ENCODE measurements at regions of chr11 and their contacts with region 1.

Region 1: DNA sequence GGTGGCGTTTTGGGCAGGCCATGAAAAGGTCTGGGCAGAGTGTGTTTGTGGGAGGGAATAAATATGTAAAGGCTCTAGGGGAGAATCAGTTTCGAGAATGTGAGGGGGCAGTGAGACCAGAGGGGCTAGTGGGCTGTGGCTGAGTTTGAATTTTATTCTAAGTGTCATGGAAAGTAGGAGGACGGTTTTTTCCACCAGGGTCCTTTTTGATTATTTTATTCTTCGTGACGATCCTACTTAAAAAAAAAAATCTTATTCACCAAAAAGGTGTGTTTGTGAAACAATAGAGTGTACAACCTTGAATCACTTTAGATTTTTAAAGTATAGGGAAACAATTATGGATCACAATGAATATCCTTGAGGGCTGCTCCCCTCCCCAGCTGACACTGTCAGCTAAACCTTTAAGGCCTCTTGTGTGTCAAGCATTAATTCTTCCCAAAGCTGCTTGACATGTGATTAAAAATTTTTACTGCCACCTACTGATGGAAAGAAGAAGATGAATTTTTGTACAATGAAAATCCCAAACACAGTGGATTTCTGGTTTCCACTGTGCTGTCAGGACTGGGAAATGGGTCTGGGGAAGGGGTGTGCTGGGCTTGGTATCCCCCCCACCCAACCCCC is 107.5 kb upstream of the OR4B1 start:
- DNase-seq: no peak
- ATAC-seq: peak; percentile 57

Region 2: GRCh38 chr11:47715082-47715669 is 394.0 kb before region 1 on chr11 and contains the start of gene AGBL2:
- intact Hi-C with region 1: no loop called
- DNase-seq: peak; percentile 93
- ATAC-seq: peak; percentile 95
- total RNA-seq, gene AGBL2: 0.14 TPM

Region 3: GRCh38 chr11:47932544-47932943 is 176.6 kb before region 1 on chr11:
- intact Hi-C with region 1: loop called (anchors 1 kb)
- DNase-seq: no peak
- ATAC-seq: no peak

Region 4: GRCh38 chr11:48052183-48053045 is 56.7 kb before region 1 on chr11:
- intact Hi-C with region 1: no loop called
- DNase-seq: no peak
- ATAC-seq: peak; percentile 51

Region 5: GRCh38 chr11:48063424-48063978 is 45.7 kb before region 1 on chr11:
- intact Hi-C with region 1: no loop called
- DNase-seq: no peak
- ATAC-seq: peak; percentile 74

Region 6: DNA sequence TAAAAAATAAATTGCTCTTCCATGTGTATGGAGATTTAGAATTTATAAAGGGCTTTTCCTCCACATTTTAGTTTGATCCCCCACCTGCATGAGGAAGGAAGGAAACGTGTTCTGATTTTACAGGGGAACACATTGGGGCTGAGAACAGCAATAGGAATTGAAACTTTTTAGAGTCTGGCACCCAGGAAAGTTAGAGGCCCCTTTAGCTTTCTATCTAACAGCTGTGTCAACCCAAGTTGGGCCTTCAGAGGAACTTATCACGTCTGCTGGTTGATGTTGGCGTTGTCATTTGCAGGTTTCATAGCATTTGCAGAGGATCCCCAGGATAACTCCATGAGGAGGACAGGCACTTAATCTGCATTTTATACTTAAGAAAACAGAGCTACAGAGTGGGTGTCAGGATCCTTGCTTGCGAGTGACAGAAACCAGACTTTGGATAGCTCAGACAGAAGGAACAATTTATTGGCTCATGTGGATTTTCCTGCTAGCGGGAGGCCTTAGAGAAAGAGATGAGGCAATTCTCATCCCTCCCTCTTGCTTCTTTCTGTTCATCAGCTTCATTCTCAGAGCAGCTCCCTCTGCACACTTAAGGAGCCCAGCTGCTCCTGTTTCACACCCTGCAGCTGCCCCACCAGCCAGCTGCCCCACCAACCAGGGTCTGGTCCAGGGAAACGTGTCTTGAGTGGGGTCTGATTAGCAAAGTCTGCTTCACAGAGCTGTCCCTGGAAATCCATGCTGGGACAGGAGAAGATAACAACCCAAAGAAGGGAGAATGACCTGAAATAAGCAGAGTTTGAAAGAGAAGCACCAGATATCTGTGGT is 15.0 kb after region 1 on chr11:
- intact Hi-C with region 1: no loop called
- DNase-seq: no peak
- ATAC-seq: no peak